ENCODE measurements at regions of chr1 and their contacts with region 1.

Region 1: DNA sequence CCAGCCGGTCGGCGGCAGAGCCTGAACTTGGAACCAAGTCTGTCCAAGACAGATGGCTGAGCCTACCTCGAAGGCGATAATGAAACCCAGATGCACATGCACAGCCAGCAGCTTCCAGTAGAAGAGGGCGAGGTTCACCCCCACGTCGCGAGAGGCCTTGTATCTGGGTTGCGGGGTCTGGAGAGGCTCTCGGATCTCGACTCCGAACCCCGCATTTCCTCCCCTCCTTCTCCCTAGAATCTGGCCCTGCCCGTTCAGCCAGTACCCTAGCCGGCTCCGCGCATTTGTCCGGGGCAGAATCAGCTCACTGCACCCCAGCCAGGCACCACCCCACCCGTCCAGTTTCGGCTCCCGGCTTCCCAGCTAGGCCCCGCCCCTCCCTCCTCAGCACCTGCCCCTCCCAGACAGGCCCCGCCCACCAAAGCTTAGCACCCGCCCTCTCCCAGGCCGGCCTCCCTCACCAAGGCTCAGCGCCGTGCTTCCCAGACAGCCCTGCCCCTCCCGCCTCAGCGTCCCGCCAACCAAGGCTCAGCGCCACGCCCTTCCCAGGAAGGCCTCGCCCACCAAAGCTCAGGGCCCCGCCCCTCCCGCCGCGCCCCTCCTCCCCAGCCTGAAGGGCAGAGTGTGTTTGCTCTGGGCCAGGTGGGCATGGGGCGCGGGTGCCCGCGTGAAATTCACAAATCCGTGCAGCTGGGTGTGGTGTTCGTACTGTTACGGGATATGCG is 4.8 kb upstream of the ARHGEF19 start:
- DNase-seq: peak; percentile 98
- ATAC-seq: peak; percentile 92 to 93
- H3K4me3 ChIP-seq: peak overlapping the region; percentile 61 to 78 (median 64)
- H3K27ac ChIP-seq: peak overlapping the region; percentile 40 to 60 (median 54)
- H3K4me1 ChIP-seq: peaks cover 12 to 16% of the 10 kb centered on the region in 2 donors
- H3K27me3 ChIP-seq: peaks cover 0 to 2% (median 2%) of the 10 kb centered on the region in 3 donors
- CTCF ChIP-seq: no peak
- POLR2A ChIP-seq: no peak

Region 2: DNA sequence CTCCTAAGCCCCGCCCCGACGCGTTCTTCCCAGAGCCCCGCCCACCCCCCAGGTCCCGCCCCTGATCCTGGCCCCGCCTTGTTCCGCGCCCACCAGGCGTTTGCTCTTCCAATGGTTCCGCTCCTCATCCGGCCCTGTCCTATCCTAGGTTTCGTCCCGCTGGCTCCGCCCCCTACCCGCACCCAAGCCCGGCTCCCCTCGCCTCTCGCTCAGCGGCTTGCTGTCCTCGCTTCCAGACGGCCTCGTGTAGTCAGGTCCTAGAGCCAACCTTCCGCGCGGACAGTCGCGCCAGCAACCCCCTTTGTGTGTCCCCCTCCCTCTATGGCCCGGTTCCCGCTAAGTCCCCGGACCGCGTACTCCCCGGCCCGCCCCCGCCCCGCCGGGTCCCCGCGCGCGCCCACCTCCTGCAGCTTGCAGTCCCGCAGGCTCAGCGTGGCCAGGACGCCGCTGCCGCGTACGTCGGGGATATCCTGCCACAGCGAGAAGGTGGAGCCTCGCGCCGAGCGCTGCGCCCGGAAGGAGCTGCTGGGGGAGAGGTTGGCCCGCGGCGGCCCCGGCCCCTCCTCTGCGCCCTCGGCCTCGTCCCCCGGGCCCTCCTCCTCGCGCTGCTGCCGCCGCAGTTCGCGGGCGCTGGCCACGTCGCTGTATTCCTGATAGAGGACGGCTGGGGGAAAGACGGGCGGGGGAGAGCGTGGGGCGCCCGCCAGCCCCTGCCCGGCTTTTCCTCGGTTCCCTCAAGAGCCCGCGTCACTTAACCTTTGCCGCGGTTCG is 10.5 kb before region 1 on chr1:
- in situ Hi-C with region 1: no loop called
- intact Hi-C with region 1: loop called (anchors 1 kb)
- DNase-seq: peak; percentile 90 to 94
- ATAC-seq: peak; percentile 94 to 96
- H3K4me3 ChIP-seq: peak overlapping the region; percentile 48 to 71 (median 64)
- H3K27ac ChIP-seq: peak overlapping the region; percentile 59 to 82 (median 72)
- H3K4me1 ChIP-seq: peaks cover 4 to 6% of the 10 kb centered on the region in 2 donors
- H3K27me3 ChIP-seq: peaks cover 6 to 9% (median 6%) of the 10 kb centered on the region in 3 donors
- CTCF ChIP-seq: peak in 1 of 5 experiments; percentile 1
- POLR2A ChIP-seq: peak; percentile 28 to 43

Region 3: GRCh38 chr1:16236511-16237342 is 19.5 kb after region 1 on chr1 and contains the start of gene CPLANE2:
- in situ Hi-C with region 1: no loop called
- intact Hi-C with region 1: loop called (anchors 1 kb)
- DNase-seq: peak; percentile 86 to 90
- ATAC-seq: peak; percentile 77 to 86
- H3K4me3 ChIP-seq: peak within 1 kb of the TSS; percentile 69 to 78 (median 74)
- H3K27ac ChIP-seq: peak within 1 kb of the TSS; percentile 76 to 90 (median 80)
- H3K4me1 ChIP-seq: peaks cover 11 to 12% of the 10 kb centered on the region in 2 donors
- H3K27me3 ChIP-seq: no peaks in the 10 kb centered on the region
- CTCF ChIP-seq: no peak
- POLR2A ChIP-seq: peak; percentile 76 to 77
- total RNA-seq, gene CPLANE2: 0.46 to 6.3 (median 3.1) TPM